CD8-positive, alpha-beta memory T cell (primary cell): ENCODE measurements at regions of chr6 and their contacts with region 1.

Region 1: DNA sequence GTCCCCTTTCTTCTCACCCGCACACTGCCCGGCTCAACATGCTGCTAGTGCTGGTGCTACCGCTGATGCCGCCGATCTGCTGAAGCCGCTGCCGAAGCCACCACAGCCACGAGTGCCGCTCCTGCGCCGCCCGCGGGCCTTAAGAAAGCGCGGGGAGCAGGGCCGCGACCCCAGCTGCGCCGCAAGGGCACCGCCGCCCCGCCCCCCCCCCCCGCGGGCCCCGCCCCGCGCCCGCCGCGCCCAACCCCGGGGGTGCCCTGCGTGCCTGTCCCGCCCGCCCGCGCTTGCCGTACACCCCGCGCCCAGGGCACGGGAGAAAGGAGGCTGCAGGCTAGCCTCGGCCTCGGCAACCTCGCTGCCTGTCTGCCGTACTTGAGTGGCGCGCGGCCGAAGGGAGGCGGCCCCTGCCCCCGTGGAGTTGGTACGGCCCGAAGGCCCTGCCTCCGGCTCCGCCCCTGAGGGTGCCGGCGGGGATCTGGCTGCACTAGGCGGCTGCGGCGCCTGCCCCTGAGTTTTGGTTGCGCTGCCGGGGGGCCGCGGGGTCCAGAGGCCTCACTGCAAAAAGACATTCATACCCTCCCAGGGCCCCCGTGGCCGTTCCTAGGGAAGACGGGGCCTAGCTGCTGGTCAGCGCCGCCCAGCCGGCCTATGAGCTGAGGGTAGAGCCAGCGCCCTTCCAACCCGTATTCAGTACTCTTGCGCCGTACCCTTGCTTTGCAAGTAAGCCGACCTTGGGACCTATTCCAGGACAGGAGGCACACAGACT is at the start of gene SOD2:
- DNase-seq: peak; percentile 70 to 88 (median 82)
- H3K4me3 ChIP-seq: peak within 1 kb of the TSS; percentile 73
- H3K4me3 Mint-ChIP-seq: peak within 1 kb of the TSS; percentile 92 to 97 (median 94)
- H3K27ac ChIP-seq: peak within 1 kb of the TSS; percentile 85
- H3K27ac Mint-ChIP-seq: peak within 1 kb of the TSS; percentile 74 to 98 (median 96)
- H3K4me1 ChIP-seq: peaks cover 33% of the 10 kb centered on the region
- H3K4me1 Mint-ChIP-seq: peaks cover 34 to 45% (median 42%) of the 10 kb centered on the region in 3 donors
- H3K27me3 ChIP-seq: no peaks in the 10 kb centered on the region
- H3K27me3 Mint-ChIP-seq: no peaks in the 10 kb centered on the region
- total RNA-seq, gene SOD2: 82.9 to 86.6 TPM

Region 2: DNA sequence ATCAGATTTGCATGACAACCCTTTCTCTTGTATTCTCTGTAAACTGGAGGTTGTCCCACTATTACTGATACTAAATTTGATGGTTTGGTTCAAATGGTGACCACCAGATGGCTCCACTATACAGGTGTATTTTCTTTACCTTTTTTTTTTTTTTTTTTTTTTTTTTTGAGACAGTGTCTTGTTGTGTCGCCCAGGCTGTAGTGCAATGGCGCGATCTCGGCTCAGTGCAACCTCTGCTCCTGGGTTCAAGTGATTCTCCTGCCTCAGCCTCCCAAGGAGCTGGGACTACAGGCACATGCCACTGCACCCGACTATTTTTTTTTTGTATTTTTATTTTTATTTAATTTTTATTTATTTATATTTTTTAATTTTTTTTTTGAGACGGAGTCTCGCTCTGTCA is 27.4 kb after region 1 on chr6:
- CTCF ChIA-PET with region 1: interaction called, 15 read pairs
- POLR2A ChIA-PET with region 1: interaction called, 60 read pairs
- DNase-seq: peak; percentile 15 to 61 (median 49)
- H3K4me3 ChIP-seq: no peak overlapping the region
- H3K4me3 Mint-ChIP-seq: no peak overlapping the region
- H3K27ac ChIP-seq: no peak overlapping the region
- H3K27ac Mint-ChIP-seq: peak overlapping the region in 1 of 8 donors; percentile 15
- H3K4me1 ChIP-seq: peaks cover under 1% of the 10 kb centered on the region
- H3K4me1 Mint-ChIP-seq: peaks cover 9 to 29% (median 20%) of the 10 kb centered on the region in 3 donors
- H3K27me3 ChIP-seq: no peaks in the 10 kb centered on the region
- H3K27me3 Mint-ChIP-seq: no peaks in the 10 kb centered on the region

Region 3: GRCh38 chr6:159726918-159727716 is 33.8 kb after region 1 on chr6 and contains the start of gene WTAP:
- CTCF ChIA-PET with region 1: interaction called, 15 read pairs
- POLR2A ChIA-PET with region 1: interaction called, 60 read pairs
- DNase-seq: peak; percentile 95 to 98 (median 96)
- H3K4me3 ChIP-seq: peak within 1 kb of the TSS; percentile 92
- H3K4me3 Mint-ChIP-seq: peak within 1 kb of the TSS; percentile 91 to 99 (median 94)
- H3K27ac ChIP-seq: peak within 1 kb of the TSS; percentile 98
- H3K27ac Mint-ChIP-seq: peak within 1 kb of the TSS; percentile 97 to 100 (median 99)
- H3K4me1 ChIP-seq: peaks cover 35% of the 10 kb centered on the region
- H3K4me1 Mint-ChIP-seq: peaks cover 54 to 75% (median 63%) of the 10 kb centered on the region in 3 donors
- H3K27me3 ChIP-seq: no peaks in the 10 kb centered on the region
- H3K27me3 Mint-ChIP-seq: peaks cover 0 to 6% of the 10 kb centered on the region in 2 donors
- total RNA-seq, gene WTAP: 95.1 to 103 TPM

Region 4: DNA sequence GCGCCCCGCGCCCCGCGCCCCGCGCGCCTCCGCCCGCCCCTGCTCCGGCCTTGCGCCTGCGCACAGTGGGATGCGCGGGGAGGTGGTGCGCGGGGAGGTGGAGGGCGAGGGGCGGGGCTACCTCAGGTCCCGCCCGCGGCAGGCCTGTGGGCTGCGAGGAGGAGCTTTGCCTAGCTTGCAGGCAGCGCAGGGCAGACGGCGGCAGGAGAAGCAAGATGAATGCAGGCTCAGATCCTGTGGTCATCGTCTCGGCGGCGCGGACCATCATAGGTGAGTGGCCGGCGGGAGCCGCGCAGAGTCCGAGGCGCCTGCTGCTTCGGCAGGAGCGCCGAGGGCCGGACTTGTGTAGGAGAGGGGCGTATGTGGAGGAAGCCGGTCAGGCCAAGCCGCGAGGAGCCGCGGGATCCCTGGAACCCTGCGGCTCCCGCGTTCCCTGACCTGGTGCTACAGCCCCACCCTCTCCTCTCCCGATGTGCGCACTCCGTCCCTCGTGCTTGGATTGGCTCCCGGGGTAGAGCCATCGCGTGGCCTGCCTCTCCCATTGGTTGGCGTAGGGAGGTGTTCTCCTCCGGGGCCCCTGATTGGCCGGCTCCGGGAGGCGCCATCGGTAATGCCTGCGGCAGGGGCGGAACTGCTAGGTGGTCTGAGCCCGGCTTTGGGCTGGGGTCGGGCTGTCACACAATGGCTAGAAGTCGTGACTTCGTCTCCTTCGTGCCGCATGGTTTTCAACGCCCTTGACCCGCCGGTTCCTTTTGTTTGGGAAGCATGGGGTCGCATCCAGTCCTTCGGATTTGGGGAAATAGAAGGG is 68.8 kb after region 1 on chr6 and contains the start of gene ACAT2:
- CTCF ChIA-PET with region 1: interaction called, 25 read pairs
- POLR2A ChIA-PET with region 1: interaction called, 9 read pairs
- DNase-seq: peak; percentile 91 to 95 (median 91)
- H3K4me3 ChIP-seq: peak within 1 kb of the TSS; percentile 96
- H3K4me3 Mint-ChIP-seq: peak within 1 kb of the TSS; percentile 92 to 99 (median 96)
- H3K27ac ChIP-seq: peak within 1 kb of the TSS; percentile 99
- H3K27ac Mint-ChIP-seq: peak within 1 kb of the TSS; percentile 74 to 99 (median 98)
- H3K4me1 ChIP-seq: peaks cover 17% of the 10 kb centered on the region
- H3K4me1 Mint-ChIP-seq: peaks cover 22 to 36% (median 27%) of the 10 kb centered on the region in 3 donors
- H3K27me3 ChIP-seq: no peaks in the 10 kb centered on the region
- H3K27me3 Mint-ChIP-seq: no peaks in the 10 kb centered on the region
- total RNA-seq, gene ACAT2: 68.8 to 69.7 TPM

Region 5: GRCh38 chr6:159789377-159790148 is 96.3 kb after region 1 on chr6 and contains the start of gene TCP1:
- CTCF ChIA-PET with region 1: interaction called, 12 read pairs
- POLR2A ChIA-PET with region 1: interaction called, 30 read pairs
- DNase-seq: peak; percentile 98 to 99 (median 99)
- H3K4me3 ChIP-seq: peak within 1 kb of the TSS; percentile 97
- H3K4me3 Mint-ChIP-seq: peak within 1 kb of the TSS; percentile 93 to 100 (median 98)
- H3K27ac ChIP-seq: peak within 1 kb of the TSS; percentile 95
- H3K27ac Mint-ChIP-seq: peak within 1 kb of the TSS; percentile 94 to 99 (median 98)
- H3K4me1 ChIP-seq: peaks cover 50% of the 10 kb centered on the region
- H3K4me1 Mint-ChIP-seq: peaks cover 57 to 77% (median 68%) of the 10 kb centered on the region in 3 donors
- H3K27me3 ChIP-seq: no peaks in the 10 kb centered on the region
- H3K27me3 Mint-ChIP-seq: peaks cover 0 to 3% of the 10 kb centered on the region in 2 donors
- total RNA-seq, gene TCP1: 589 to 617 TPM